ENCODE measurements at regions of chr1 and their contacts with region 1.

Region 1: GRCh38 chr1:44208226-44208625 is 5.0 kb upstream of the DMAP1 start:
- DNase-seq: no peak
- H3K4me3 ChIP-seq: no peak overlapping the region
- H3K27ac ChIP-seq: no peak overlapping the region
- H3K4me1 ChIP-seq: peaks cover 9% of the 10 kb centered on the region
- CTCF ChIP-seq: no peak

Region 2: GRCh38 chr1:44437107-44437716 is 229.0 kb after region 1 on chr1:
- CTCF ChIA-PET with region 1: no interaction called
- POLR2A ChIA-PET with region 1: interaction called, 10 read pairs
- intact Hi-C with region 1: no loop called
- DNase-seq: no peak
- H3K4me3 ChIP-seq: no peak overlapping the region
- H3K27ac ChIP-seq: no peak overlapping the region
- H3K4me1 ChIP-seq: no peaks in the 10 kb centered on the region
- CTCF ChIP-seq: no peak